Calu3 (cell line): ENCODE measurements at regions of chr11 and their contacts with region 1.

Region 1: DNA sequence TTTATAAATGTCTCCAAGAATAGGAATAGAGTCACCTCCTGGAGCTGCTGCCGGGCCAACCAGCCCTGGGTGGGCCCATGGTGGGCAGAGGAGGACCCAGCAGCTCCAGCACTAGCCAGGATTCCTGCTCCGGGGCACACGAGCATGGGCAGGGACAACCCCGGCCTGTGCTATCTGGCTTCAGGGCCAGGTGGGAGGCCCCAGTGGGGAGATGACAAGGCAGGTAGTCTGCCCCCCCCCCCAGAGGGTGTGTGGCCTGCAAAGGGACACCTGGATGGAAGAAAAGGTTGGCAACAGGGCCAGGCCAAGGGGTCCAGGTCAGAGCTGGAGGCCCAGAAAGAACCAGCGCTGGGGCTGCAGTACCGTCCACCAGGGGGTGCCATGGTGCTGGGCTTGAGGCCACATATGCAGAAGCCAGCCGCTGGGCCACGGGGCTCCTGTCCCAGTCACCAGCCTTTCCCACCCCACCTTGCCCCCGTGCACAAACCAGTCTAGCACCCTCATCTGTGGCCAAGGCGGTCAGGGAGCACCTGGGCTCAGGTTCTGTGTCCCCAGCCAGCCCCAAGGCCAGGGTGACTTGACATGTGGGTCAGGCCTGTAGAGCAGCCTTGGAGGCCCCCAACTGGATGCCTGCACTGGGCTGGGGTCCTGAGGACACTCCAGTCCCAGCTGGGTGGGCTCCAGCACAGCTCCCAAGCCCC is 3.5 kb downstream of the TSPAN32 start:
- DNase-seq: peak; percentile 90
- H3K4me3 Mint-ChIP-seq: no peak overlapping the region
- H3K27ac Mint-ChIP-seq: no peak overlapping the region
- H3K4me1 Mint-ChIP-seq: no peaks in the 10 kb centered on the region
- H3K27me3 Mint-ChIP-seq: peaks cover 35% of the 10 kb centered on the region
- CTCF ChIP-seq: peak; percentile 79

Region 2: GRCh38 chr11:2420502-2421225 is 115.4 kb after region 1 on chr11:
- CTCF ChIA-PET with region 1: interaction called, 97 read pairs
- intact Hi-C with region 1: loop called (anchors 1 kb)
- DNase-seq: peak; percentile 84
- H3K4me3 Mint-ChIP-seq: no peak overlapping the region
- H3K27ac Mint-ChIP-seq: no peak overlapping the region
- H3K4me1 Mint-ChIP-seq: no peaks in the 10 kb centered on the region
- H3K27me3 Mint-ChIP-seq: peaks cover 29% of the 10 kb centered on the region
- CTCF ChIP-seq: peak; percentile 90

Region 3: DNA sequence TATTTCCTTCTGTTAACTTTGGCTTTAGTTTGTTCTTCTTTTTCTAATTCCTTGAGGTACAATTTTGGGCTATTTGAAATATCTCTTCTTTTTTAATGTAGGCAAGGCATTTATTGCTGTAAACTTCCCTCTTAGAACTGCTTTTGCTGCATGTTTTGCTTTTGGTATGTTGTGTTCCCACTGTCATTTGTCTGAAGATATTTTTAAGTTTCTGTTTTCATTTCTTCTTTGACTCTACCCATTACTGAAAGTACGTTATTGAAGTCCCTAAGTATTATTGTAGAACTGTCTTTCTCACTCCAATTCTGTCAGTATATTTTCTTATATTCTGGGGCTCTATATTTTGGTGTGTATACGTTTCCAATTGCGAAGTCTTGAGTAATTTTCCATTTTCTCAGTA is 316.6 kb after region 1 on chr11:
- CTCF ChIA-PET with region 1: no interaction called
- intact Hi-C with region 1: no loop called
- DNase-seq: no peak
- H3K4me3 Mint-ChIP-seq: no peak overlapping the region
- H3K27ac Mint-ChIP-seq: no peak overlapping the region
- H3K4me1 Mint-ChIP-seq: no peaks in the 10 kb centered on the region
- H3K27me3 Mint-ChIP-seq: peaks cover 9% of the 10 kb centered on the region
- CTCF ChIP-seq: no peak